Activated CD4-positive, alpha-beta memory T cell treated with anti-CD3 and anti-CD28 coated beads for 36 hours (primary cell): ENCODE measurements at regions of chr5 and their contacts with region 1.

Region 1: GRCh38 chr5:134370871-134371833 is at the start of gene UBE2B:
- DNase-seq: peak; percentile 98
- H3K4me3 Mint-ChIP-seq: peak within 1 kb of the TSS; percentile 92
- H3K27ac Mint-ChIP-seq: peak within 1 kb of the TSS; percentile 96
- H3K4me1 Mint-ChIP-seq: peaks cover 55% of the 10 kb centered on the region
- H3K27me3 Mint-ChIP-seq: peaks cover 2% of the 10 kb centered on the region
- total RNA-seq, gene UBE2B: 124 TPM

Region 2: DNA sequence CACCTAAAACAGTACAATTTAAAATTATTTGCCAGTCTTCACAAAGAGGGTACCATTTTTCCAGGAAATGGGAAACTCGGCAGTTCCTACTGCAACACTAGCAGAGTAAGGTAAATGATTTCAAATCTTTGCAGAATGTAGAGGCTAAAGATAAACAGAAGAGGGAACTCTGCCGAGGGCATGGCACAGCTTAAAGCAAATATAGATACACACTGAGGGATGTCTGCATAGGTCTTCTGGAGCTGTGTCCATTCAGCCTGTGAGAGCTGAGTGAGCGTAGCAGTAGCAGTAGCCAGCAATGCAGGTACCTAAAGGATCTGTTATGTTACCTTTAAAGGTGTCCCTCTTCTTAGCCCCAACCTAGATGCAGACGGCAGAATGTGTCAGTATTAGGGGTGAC is 21.7 kb before region 1 on chr5:
- CTCF ChIA-PET with region 1: no interaction called
- POLR2A ChIA-PET with region 1: no interaction called
- intact Hi-C with region 1: no loop called
- DNase-seq: no peak
- H3K4me3 Mint-ChIP-seq: no peak overlapping the region
- H3K27ac Mint-ChIP-seq: no peak overlapping the region
- H3K4me1 Mint-ChIP-seq: no peaks in the 10 kb centered on the region
- H3K27me3 Mint-ChIP-seq: no peaks in the 10 kb centered on the region

Region 3: GRCh38 chr5:134411546-134412266 is 40.6 kb after region 1 on chr5 and contains the start of gene CDKN2AIPNL:
- CTCF ChIA-PET with region 1: interaction called, 4 read pairs
- POLR2A ChIA-PET with region 1: interaction called, 8 read pairs
- intact Hi-C with region 1: loop called (anchors 1 kb)
- DNase-seq: peak; percentile 94
- H3K4me3 Mint-ChIP-seq: peak within 1 kb of the TSS; percentile 87
- H3K27ac Mint-ChIP-seq: peak within 1 kb of the TSS; percentile 73
- H3K4me1 Mint-ChIP-seq: peaks cover 31% of the 10 kb centered on the region
- H3K27me3 Mint-ChIP-seq: no peaks in the 10 kb centered on the region
- total RNA-seq, gene CDKN2AIPNL: 32.0 to 33.3 TPM

Region 4: DNA sequence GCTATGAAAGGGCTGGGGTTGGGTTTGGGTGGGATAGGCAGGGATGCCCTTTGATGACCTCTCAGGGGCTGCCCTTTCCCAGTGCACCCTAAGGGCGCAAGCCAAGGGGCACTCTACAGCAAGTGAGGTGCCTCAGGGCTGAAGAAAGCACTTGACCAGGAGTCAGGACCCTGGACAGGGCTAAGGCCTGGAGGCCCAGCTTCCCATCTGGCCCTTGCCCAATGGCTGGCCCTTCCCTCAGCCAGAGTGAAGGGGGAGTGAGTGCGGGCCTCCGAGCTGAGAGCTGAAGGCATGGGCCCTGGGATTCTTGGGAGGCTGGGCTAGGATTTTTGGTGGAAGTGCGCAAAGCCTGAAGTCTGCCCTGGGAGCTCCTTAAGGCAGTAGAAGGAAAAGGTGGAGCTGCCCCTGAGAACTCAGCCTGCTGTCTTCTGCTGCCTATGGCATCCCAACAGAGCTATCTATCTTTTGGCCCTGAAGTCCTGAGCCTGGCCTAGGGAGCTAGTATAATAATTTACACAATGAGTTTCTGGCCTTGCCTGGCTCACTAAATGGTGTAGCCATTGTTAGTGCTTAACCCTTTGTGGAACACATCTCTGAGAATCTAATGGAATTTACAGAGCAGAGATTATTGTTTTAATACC is 170.7 kb after region 1 on chr5:
- CTCF ChIA-PET with region 1: no interaction called
- POLR2A ChIA-PET with region 1: interaction called, 5 read pairs
- intact Hi-C with region 1: loop called (anchors 5 kb)
- DNase-seq: peak; percentile 49
- H3K4me3 Mint-ChIP-seq: no peak overlapping the region
- H3K27ac Mint-ChIP-seq: peak overlapping the region; percentile 66
- H3K4me1 Mint-ChIP-seq: peaks cover 67% of the 10 kb centered on the region
- H3K27me3 Mint-ChIP-seq: no peaks in the 10 kb centered on the region

Region 5: DNA sequence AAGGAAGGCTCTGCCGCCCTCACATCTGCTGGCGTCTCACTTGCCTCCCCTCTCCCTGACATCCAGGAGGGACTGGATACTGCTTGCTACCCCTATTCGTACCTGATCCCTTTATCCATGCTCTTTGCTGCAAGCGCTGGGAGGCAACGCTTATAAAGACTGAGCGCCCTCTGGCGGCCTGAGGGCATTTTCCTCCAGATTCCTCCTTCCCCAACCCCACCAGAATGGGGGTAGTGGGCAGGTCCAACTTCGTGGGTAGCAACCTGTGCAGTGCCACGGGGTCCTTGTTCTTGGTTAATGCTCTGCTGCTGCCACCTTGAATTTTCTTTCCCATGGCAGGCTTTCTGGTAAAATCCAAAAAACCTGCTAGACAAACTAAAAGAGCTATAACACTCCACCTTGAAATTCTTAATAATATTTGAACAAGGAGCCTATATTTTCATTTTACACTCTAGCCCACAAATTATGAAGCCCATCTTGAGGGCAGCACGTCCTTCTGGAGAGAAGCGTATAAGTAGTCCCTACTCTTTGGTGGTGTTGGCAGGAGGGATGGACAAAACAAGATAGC is 206.7 kb after region 1 on chr5:
- CTCF ChIA-PET with region 1: interaction called, 5 read pairs
- POLR2A ChIA-PET with region 1: no interaction called
- intact Hi-C with region 1: loop called (anchors 5 kb)
- DNase-seq: peak; percentile 87
- H3K4me3 Mint-ChIP-seq: no peak overlapping the region
- H3K27ac Mint-ChIP-seq: peak overlapping the region; percentile 63
- H3K4me1 Mint-ChIP-seq: peaks cover 8% of the 10 kb centered on the region
- H3K27me3 Mint-ChIP-seq: no peaks in the 10 kb centered on the region